PC-3 (cell line): ENCODE measurements at regions of chrX and their contacts with region 1.

Region 1: GRCh38 chrX:11100281-11101035 is 10.7 kb upstream of the HCCS start:
- DNase-seq: peak; percentile 65
- ATAC-seq: peak; percentile 71
- H3K4me3 ChIP-seq: no peak overlapping the region
- H3K27ac ChIP-seq: peak overlapping the region; percentile 34; the same call in 1 of the 2 replicates
- H3K4me1 ChIP-seq: peaks cover 6% of the 10 kb centered on the region
- H3K27me3 ChIP-seq: no peaks in the 10 kb centered on the region
- CTCF ChIP-seq: peak; percentile 73

Region 2: DNA sequence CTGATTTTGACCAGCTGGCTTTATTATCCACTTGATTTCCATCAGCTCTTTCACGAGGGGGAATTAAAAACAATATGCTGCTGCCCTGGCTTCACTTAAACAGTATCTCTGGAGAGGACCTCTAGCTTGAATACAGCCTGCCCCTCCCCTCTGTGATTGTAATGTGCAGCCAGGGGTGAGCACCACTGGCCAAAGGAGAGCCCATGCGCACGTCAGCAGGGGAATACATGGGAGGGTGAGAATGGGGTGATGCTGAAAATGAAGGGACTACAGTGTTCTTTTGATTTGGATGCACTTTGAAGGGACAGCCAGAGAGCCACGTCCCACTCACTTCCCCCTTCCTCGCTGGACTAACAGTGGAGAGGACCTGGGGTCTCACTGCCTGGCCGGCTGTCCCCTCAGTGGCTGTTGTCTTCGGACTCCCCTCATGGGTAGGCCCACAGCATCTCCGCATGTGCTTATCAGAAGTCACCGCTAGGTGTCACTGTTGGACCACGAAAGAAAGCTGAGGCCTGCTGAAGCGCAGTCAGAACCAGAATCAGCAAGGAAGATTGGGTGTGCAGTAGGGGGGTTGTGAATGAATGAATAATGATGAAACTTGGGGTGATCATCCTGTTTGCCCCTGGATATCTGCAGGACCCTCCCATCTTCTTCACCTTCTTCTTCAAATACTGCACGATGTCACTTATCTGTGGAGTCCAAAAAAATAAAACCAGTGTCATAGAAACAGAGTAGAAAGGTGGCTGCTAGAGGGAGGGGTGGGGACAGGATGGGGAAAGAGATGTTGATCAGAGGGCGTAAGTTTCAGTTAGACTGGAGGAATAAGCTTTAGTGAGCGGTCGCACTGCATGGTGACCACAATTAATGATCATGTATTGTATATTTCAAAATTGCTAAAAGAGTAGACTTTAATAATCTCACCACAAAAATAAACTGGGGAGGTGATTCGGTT is 910.9 kb before region 1 on chrX:
- CTCF ChIA-PET with region 1: no interaction called
- POLR2A ChIA-PET with region 1: no interaction called
- intact Hi-C with region 1: loop called (anchors 10 kb)
- DNase-seq: peak; percentile 86
- ATAC-seq: peak; percentile 95
- H3K4me3 ChIP-seq: no peak overlapping the region
- H3K27ac ChIP-seq: peak overlapping the region; percentile 70
- H3K4me1 ChIP-seq: peaks cover 7% of the 10 kb centered on the region
- H3K27me3 ChIP-seq: no peaks in the 10 kb centered on the region
- CTCF ChIP-seq: peak; percentile 84

Region 3: GRCh38 chrX:10636337-10636736 is 464.1 kb before region 1 on chrX:
- CTCF ChIA-PET with region 1: no interaction called
- POLR2A ChIA-PET with region 1: no interaction called
- intact Hi-C with region 1: loop called (anchors 10 kb)
- DNase-seq: peak; percentile 80
- ATAC-seq: peak; percentile 25
- H3K4me3 ChIP-seq: peak overlapping the region; percentile 51; the same call in 1 of the 2 replicates
- H3K27ac ChIP-seq: peak overlapping the region; percentile 97; the same call in 1 of the 2 replicates
- H3K4me1 ChIP-seq: peaks cover 44% of the 10 kb centered on the region
- H3K27me3 ChIP-seq: no peaks in the 10 kb centered on the region
- CTCF ChIP-seq: peak; percentile 82

Region 4: DNA sequence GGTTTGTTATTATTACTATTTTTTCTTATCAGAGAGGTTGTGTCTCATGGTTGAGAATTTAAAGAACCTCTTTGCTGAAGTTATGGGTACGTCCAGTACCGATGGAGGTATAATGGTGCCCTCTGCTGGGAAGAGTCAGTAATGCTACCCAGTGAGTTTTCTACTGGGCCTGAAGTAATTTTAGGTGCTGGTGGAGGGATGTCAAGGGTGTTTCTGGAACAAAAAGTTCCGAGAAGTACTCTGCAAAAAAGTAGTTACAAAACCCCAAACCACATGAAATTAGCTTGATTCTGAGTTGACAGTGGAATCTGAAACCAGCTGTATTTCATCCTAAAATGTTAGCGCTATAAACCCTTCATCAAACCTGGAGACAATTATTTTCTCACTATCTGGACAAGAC is 377.6 kb before region 1 on chrX:
- CTCF ChIA-PET with region 1: interaction called, 18 read pairs
- POLR2A ChIA-PET with region 1: no interaction called
- intact Hi-C with region 1: loop called (anchors 1 kb)
- DNase-seq: peak; percentile 78
- ATAC-seq: peak; percentile 64
- H3K4me3 ChIP-seq: no peak overlapping the region
- H3K27ac ChIP-seq: no peak overlapping the region
- H3K4me1 ChIP-seq: no peaks in the 10 kb centered on the region
- H3K27me3 ChIP-seq: no peaks in the 10 kb centered on the region
- CTCF ChIP-seq: peak; percentile 78

Region 5: GRCh38 chrX:10833299-10834169 is 266.9 kb before region 1 on chrX:
- CTCF ChIA-PET with region 1: no interaction called
- POLR2A ChIA-PET with region 1: interaction called, 3 read pairs
- intact Hi-C with region 1: loop called (anchors 2 kb)
- DNase-seq: peak; percentile 85
- ATAC-seq: peak; percentile 91
- H3K4me3 ChIP-seq: peak overlapping the region; percentile 82
- H3K27ac ChIP-seq: peak overlapping the region; percentile 47
- H3K4me1 ChIP-seq: peaks cover 20% of the 10 kb centered on the region
- H3K27me3 ChIP-seq: no peaks in the 10 kb centered on the region
- CTCF ChIP-seq: no peak

Region 6: DNA sequence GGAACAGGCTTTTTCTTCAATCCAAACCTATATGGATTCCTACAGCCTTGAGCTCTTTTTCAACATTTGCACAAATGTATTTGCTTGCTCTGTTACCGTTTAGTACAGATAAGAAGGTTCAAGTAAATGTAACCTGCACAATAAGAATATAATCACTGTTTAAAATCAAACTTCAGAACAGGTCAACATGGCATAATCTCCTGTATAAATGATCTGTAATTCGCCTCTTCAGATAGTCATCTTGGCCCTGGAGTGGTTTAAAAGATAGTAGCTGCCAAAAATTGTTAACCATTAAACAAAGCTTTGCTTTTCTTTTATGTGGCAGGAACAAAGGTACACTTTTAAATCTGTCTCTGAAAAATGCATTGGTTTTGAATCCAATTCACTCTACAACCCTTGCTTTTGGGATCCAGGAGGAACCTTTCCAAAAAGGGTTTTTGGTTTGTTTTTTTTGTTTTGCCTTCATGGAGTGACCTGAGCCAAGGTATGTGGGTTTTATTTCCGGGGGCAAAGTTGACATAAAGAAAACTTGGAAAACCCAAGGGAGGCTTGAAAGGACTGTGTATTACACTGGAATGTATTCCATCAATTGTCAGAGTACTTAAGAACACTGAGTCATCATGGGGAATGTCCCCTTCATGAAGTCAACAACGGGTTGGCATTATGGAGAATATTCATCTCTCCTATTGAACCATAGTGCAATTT is 199.7 kb before region 1 on chrX:
- CTCF ChIA-PET with region 1: no interaction called
- POLR2A ChIA-PET with region 1: no interaction called
- intact Hi-C with region 1: loop called (anchors 10 kb)
- DNase-seq: peak; percentile 84
- ATAC-seq: peak; percentile 81
- H3K4me3 ChIP-seq: no peak overlapping the region; the same call in 1 of the 2 replicates
- H3K27ac ChIP-seq: peak overlapping the region; percentile 54
- H3K4me1 ChIP-seq: peaks cover 42% of the 10 kb centered on the region
- H3K27me3 ChIP-seq: no peaks in the 10 kb centered on the region
- CTCF ChIP-seq: no peak

Region 7: DNA sequence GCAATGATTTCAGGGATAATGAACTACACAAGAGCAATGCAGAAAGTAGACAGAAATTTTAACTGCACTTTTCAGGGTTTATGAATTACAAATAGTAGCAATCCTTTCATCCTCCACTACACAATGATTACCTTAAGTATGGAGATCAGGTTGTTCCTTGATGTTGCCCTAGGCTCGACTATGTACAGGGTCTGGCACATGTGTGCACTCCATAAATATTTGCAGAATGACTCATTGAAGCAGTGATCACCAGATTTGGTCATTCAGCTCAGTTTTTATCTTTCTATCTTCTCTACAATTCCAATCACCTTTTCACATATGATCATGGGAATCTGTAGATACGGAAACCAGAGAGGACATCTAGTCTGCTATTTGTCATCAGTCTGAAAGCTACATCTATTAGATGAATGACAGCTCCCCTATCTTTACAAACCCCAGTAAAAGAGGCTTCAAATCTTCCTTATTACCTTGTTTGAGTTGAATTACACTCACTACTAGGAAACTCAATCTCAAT is 161.0 kb before region 1 on chrX:
- CTCF ChIA-PET with region 1: no interaction called
- POLR2A ChIA-PET with region 1: no interaction called
- intact Hi-C with region 1: loop called (anchors 10 kb)
- DNase-seq: peak; percentile 77
- ATAC-seq: peak; percentile 93
- H3K4me3 ChIP-seq: no peak overlapping the region
- H3K27ac ChIP-seq: no peak overlapping the region
- H3K4me1 ChIP-seq: peaks cover 13% of the 10 kb centered on the region
- H3K27me3 ChIP-seq: no peaks in the 10 kb centered on the region
- CTCF ChIP-seq: no peak

Region 8: GRCh38 chrX:10971176-10971575 is 129.3 kb before region 1 on chrX:
- CTCF ChIA-PET with region 1: no interaction called
- POLR2A ChIA-PET with region 1: no interaction called
- intact Hi-C with region 1: no loop called
- DNase-seq: no peak
- ATAC-seq: no peak
- H3K4me3 ChIP-seq: no peak overlapping the region
- H3K27ac ChIP-seq: no peak overlapping the region
- H3K4me1 ChIP-seq: no peaks in the 10 kb centered on the region
- H3K27me3 ChIP-seq: no peaks in the 10 kb centered on the region
- CTCF ChIP-seq: no peak

Region 9: DNA sequence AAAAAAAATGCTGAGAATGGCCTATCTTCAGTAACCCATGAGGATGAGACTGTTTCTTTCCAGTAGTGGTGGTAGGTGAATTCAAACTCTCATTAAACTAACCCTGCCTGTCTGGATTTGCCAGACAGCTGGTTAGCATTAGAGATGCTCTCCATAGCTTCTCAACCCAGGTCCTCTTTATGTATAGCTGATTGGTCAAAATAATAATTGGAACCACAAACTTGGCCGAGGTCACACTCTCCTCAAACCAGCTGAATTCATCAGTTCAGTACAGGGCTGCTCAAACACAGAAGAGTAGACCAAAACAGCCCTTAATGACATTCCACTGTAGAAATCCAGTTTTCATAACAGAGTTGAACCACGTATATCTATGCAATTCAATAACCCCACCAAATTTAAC is 96.0 kb after region 1 on chrX:
- CTCF ChIA-PET with region 1: no interaction called
- POLR2A ChIA-PET with region 1: no interaction called
- intact Hi-C with region 1: no loop called
- DNase-seq: no peak
- ATAC-seq: no peak
- H3K4me3 ChIP-seq: no peak overlapping the region
- H3K27ac ChIP-seq: no peak overlapping the region
- H3K4me1 ChIP-seq: peaks cover 22% of the 10 kb centered on the region
- H3K27me3 ChIP-seq: no peaks in the 10 kb centered on the region
- CTCF ChIP-seq: no peak